ENCODE measurements at regions of chr13 and their contacts with region 1.

Region 1: DNA sequence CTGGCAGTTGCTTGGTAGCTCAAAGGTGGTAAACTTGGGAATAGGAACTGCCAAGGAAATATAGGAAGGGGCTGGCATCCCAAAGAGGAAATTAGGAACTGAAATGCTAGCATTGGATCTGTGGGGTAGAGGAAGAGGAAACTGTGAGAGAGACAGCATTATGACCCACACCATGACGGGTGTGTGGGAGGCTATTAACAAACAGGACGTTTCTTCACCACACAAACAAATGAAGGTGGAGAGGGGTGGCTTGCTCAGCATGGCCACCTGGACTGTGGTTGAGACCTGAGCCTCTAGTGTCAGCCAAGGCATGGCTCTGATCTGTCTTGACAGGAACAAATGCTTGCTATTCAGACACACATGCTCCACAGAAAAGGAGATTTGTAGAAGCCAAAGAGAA is 178.2 kb downstream of the B3GLCT start:
- DNase-seq: no peak
- H3K27ac ChIP-seq: no peak overlapping the region
- CTCF ChIP-seq: no peak

Region 2: DNA sequence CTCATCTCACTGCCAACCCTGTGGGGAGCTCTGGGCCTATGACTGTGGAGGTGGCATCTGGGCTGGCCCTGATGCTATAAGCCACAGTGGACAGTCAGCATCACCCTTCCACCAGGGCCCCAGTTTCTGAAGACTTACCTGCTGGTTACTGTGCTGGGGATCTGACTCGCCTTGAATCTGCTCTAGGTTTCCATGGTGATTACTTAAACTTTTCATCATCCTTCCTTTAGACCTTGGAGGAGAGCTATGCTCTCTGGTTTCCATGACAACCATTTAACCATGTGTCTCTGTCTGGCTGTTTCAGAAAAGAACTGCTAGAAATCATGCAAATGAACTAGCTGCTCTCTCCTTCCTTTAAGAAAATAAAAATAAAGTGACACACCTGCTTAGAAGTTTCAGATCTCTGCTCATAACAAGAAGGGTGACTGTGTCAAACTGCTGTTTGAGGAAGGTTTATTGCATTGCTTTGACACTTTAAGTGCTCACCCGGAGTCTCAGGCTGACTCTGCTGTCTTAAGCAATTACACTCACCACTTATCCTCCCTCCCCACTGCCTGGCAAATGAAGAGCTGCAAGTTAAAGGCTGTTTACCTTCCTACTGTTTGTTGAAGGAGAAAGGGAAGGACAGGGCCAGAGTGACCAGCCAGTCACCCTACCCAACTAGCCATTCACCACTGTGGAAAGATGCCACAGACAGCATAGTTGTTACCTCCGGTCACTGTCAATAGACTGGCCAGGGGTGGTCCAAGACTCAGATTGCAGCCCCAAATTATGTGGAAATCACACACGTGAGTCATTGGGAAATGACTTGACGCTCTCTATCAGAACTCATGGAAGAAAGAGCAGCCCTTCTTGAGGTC is 303.9 kb before region 1 on chr13:
- CTCF ChIA-PET with region 1: no interaction called
- POLR2A ChIA-PET with region 1: no interaction called
- DNase-seq: no peak
- H3K27ac ChIP-seq: no peak overlapping the region
- CTCF ChIP-seq: no peak

Region 3: GRCh38 chr13:31328549-31329235 is 49.3 kb before region 1 on chr13:
- CTCF ChIA-PET with region 1: interaction called, 10 read pairs
- POLR2A ChIA-PET with region 1: no interaction called
- DNase-seq: no peak
- H3K27ac ChIP-seq: no peak overlapping the region
- CTCF ChIP-seq: no peak

Region 4: GRCh38 chr13:31394491-31394890 is 16.5 kb after region 1 on chr13:
- CTCF ChIA-PET with region 1: no interaction called
- POLR2A ChIA-PET with region 1: no interaction called
- DNase-seq: no peak
- H3K27ac ChIP-seq: no peak overlapping the region
- CTCF ChIP-seq: no peak

Measured in RWPE1 (cell line).